Activated B cell treated with CpG ODN at 0.5 μM for 24 hours (primary cell): ENCODE measurements at regions of chr9 and their contacts with region 1.

Region 1: GRCh38 chr9:128683340-128684278 is 5.4 kb upstream of the SET start:
- DNase-seq: peak; percentile 56
- ATAC-seq: peak; percentile 57
- H3K4me3 Mint-ChIP-seq: peak overlapping the region; percentile 100
- H3K27ac Mint-ChIP-seq: peak overlapping the region; percentile 99
- H3K4me1 Mint-ChIP-seq: peaks cover 59% of the 10 kb centered on the region
- H3K27me3 Mint-ChIP-seq: no peaks in the 10 kb centered on the region
- CTCF ChIP-seq: no peak

Region 2: DNA sequence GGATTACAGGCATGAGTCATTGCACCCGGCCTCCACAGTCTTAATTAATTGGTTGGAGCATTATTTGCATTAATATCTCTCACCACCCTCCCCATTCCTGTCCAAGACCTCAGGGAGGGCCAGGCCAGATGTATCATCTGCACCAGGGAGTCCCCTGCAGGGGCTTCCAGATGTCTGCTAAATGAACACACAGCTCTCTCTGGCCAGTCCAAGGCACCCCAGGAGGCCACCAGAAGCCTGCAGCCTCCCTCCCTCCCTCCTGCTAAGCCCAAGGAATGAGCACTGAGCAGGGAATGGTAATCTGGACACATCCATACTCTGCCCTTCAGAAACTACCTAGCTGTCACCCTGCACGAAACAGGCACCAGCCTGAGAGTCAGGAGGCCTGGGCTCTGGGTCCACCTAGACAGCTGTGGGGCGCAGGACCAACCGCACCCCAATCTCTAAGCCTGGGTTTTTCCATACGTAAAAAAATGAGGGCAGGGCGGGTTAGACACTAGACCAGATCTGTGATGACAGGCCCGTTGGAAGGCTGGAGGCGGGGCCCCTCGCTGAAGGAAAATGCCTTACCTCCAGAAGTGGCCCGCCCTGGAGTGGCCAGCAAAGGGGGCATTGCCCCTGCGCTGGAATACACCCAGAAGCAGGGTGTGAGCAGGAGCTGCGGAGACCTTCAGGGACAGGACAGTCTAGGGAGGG is 500.6 kb before region 1 on chr9:
- CTCF ChIA-PET with region 1: no interaction called
- POLR2A ChIA-PET with region 1: no interaction called
- intact Hi-C with region 1: no loop called
- DNase-seq: no peak
- ATAC-seq: no peak
- H3K4me3 Mint-ChIP-seq: no peak overlapping the region
- H3K27ac Mint-ChIP-seq: no peak overlapping the region
- H3K4me1 Mint-ChIP-seq: peaks cover under 1% of the 10 kb centered on the region
- H3K27me3 Mint-ChIP-seq: no peaks in the 10 kb centered on the region
- CTCF ChIP-seq: no peak

Region 3: GRCh38 chr9:128696923-128697707 is 13.5 kb after region 1 on chr9:
- CTCF ChIA-PET with region 1: interaction called, 6 read pairs
- POLR2A ChIA-PET with region 1: interaction called, 61 read pairs
- intact Hi-C with region 1: loop called (anchors 2 kb)
- DNase-seq: no peak
- ATAC-seq: no peak
- H3K4me3 Mint-ChIP-seq: no peak overlapping the region
- H3K27ac Mint-ChIP-seq: peak overlapping the region; percentile 12
- H3K4me1 Mint-ChIP-seq: peaks cover 41% of the 10 kb centered on the region
- H3K27me3 Mint-ChIP-seq: no peaks in the 10 kb centered on the region
- CTCF ChIP-seq: no peak